ENCODE measurements at regions of chr22 and their contacts with region 1.

Region 1: DNA sequence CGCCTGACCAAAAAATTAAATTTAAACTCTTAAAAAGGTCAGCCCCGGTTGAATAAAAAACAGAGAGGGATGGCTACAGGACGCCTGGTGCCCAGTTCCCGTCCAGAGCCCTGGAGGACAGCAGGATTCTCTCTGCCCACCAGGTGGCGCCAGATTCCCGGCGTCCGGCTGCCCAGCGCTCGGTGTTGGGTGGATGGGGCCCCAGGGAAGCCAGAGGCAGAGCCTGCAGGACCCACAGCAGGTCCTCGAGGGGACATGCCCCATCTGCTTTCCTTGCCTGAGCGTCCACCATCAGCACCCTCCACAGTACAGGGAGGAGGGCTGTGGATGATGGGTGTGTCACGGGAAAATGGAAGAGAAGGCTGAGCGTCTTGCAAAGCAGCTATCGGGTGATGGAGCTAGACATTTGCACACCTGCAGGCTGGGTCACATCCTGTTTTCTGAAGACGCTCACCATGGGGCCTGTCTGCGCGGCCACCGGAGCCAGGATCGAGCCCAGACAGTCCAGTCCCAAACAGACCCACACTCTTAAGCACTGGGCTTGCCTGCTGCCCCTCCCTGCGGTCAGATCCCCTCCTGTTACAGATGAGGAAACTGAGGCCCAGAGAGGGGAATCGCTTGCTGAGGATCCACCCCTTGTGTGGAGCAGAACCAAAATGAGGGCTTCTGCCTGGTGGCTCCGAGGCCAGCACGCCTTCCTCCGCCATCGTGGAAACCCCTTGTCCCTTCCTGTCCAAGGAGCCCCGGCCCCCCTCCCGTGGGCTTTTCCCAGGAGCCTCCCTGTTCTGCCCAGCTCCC is 18.5 kb upstream of the CBX7 start:
- DNase-seq: peak; percentile 93
- ATAC-seq: peak; percentile 82
- H3K4me3 Mint-ChIP-seq: peak overlapping the region; percentile 76
- H3K27ac Mint-ChIP-seq: peak overlapping the region; percentile 85
- H3K4me1 Mint-ChIP-seq: peaks cover 27% of the 10 kb centered on the region
- H3K27me3 Mint-ChIP-seq: peaks cover 12% of the 10 kb centered on the region

Region 2: GRCh38 chr22:39306581-39307361 is 135.7 kb after region 1 on chr22:
- POLR2A ChIA-PET with region 1: interaction called, 10 read pairs
- DNase-seq: peak; percentile 62
- ATAC-seq: peak; percentile 63
- H3K4me3 Mint-ChIP-seq: no peak overlapping the region
- H3K27ac Mint-ChIP-seq: no peak overlapping the region
- H3K4me1 Mint-ChIP-seq: peaks cover 6% of the 10 kb centered on the region
- H3K27me3 Mint-ChIP-seq: no peaks in the 10 kb centered on the region